ENCODE measurements at regions of chrX and their contacts with region 1.

Region 1: DNA sequence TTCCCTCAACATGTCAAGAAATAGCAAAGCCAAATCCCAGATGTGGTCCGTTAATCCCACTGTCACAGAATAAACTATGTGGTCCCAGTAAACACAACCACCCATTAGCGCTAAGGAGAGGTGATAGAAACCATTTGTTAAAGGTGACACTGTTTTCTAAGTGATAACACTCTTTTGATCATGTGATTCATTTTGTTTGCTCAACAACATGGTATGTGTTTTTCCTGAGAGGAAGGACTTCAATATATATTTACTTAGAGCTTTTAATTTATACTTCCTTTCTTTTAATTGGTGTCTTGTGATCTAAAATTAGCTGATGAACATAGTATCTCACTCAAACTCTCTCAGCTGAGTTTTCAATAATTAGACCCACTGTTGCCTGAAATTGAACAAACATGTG is 55.0 kb downstream of the MID1 start:
- DNase-seq: no peak
- H3K4me3 ChIP-seq: no peak overlapping the region
- H3K4me3 Mint-ChIP-seq: no peak overlapping the region
- H3K27ac Mint-ChIP-seq: no peak overlapping the region
- H3K4me1 ChIP-seq: no peaks in the 10 kb centered on the region
- H3K4me1 Mint-ChIP-seq: peaks cover 7% of the 10 kb centered on the region
- H3K27me3 ChIP-seq: no peaks in the 10 kb centered on the region
- H3K27me3 Mint-ChIP-seq: no peaks in the 10 kb centered on the region
- CTCF ChIP-seq: no peak

Region 2: GRCh38 chrX:10496345-10496965 is 68.9 kb before region 1 on chrX:
- CTCF ChIA-PET with region 1: no interaction called
- POLR2A ChIA-PET with region 1: interaction called, 10 read pairs
- intact Hi-C with region 1: no loop called
- DNase-seq: no peak
- H3K4me3 ChIP-seq: no peak overlapping the region
- H3K4me3 Mint-ChIP-seq: no peak overlapping the region
- H3K27ac Mint-ChIP-seq: no peak overlapping the region
- H3K4me1 ChIP-seq: peaks cover 6% of the 10 kb centered on the region; the same call in 1 of the 2 replicates
- H3K4me1 Mint-ChIP-seq: peaks cover 15% of the 10 kb centered on the region
- H3K27me3 ChIP-seq: no peaks in the 10 kb centered on the region
- H3K27me3 Mint-ChIP-seq: no peaks in the 10 kb centered on the region
- CTCF ChIP-seq: no peak

Measured in Caco-2 (cell line).